Activated T-helper 1 cell treated with anti-CD3 and anti-CD28 coated beads, Interleukin-12 subunit alpha, Interleukin-12 subunit beta, Interleukin-2, Interleukin-4 antibody, amounts not matched to agents 30 ng/mL and 10 ng/mL and 1 ng/mL, durations not matched to agents 14 hours and 24 hours and 36 hours (primary cell): ENCODE measurements at regions of chr20 and their contacts with region 1.

Region 1: GRCh38 chr20:34069341-34070078 is 42.5 kb downstream of the EIF2S2 start:
- DNase-seq: peak; percentile 25
- H3K4me3 Mint-ChIP-seq: no peak overlapping the region
- H3K27ac Mint-ChIP-seq: no peak overlapping the region
- H3K4me1 Mint-ChIP-seq: peaks cover 35% of the 10 kb centered on the region
- H3K27me3 Mint-ChIP-seq: no peaks in the 10 kb centered on the region

Region 2: GRCh38 chr20:33915726-33916331 is 153.7 kb before region 1 on chr20:
- intact Hi-C with region 1: loop called (anchors 1 kb)
- DNase-seq: peak; percentile 20
- H3K4me3 Mint-ChIP-seq: no peak overlapping the region
- H3K27ac Mint-ChIP-seq: no peak overlapping the region
- H3K4me1 Mint-ChIP-seq: peaks cover 5% of the 10 kb centered on the region
- H3K27me3 Mint-ChIP-seq: peaks cover 13% of the 10 kb centered on the region

Region 3: DNA sequence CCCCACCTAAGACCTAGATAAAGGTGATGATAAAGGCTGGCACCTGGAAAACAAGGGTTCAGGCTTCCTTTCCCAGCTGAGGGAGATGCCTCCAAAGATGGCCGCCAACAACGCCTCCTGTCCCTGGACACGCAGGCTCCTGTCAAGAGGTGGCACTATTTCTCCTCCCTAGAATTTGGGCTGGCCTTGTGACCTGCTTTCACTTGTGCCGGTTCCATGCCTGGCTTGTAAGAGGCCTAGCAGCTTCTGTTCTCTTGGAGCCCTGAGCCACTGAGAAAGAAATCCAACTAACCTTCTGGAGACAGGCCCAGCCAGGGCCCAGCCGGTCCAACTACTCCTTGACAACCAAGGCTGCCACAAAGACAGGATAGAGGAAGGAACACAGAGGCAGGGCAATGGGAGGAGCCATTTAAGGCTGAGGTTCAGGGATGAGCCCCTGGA is 136.0 kb before region 1 on chr20:
- intact Hi-C with region 1: loop called (anchors 1 kb)
- DNase-seq: peak; percentile 42
- H3K4me3 Mint-ChIP-seq: no peak overlapping the region
- H3K27ac Mint-ChIP-seq: no peak overlapping the region
- H3K4me1 Mint-ChIP-seq: no peaks in the 10 kb centered on the region
- H3K27me3 Mint-ChIP-seq: peaks cover 3% of the 10 kb centered on the region

Region 4: GRCh38 chr20:33947709-33948295 is 121.7 kb before region 1 on chr20:
- intact Hi-C with region 1: loop called (anchors 1 kb)
- DNase-seq: peak; percentile 9
- H3K4me3 Mint-ChIP-seq: no peak overlapping the region
- H3K27ac Mint-ChIP-seq: no peak overlapping the region
- H3K4me1 Mint-ChIP-seq: no peaks in the 10 kb centered on the region
- H3K27me3 Mint-ChIP-seq: peaks cover 4% of the 10 kb centered on the region

Region 5: DNA sequence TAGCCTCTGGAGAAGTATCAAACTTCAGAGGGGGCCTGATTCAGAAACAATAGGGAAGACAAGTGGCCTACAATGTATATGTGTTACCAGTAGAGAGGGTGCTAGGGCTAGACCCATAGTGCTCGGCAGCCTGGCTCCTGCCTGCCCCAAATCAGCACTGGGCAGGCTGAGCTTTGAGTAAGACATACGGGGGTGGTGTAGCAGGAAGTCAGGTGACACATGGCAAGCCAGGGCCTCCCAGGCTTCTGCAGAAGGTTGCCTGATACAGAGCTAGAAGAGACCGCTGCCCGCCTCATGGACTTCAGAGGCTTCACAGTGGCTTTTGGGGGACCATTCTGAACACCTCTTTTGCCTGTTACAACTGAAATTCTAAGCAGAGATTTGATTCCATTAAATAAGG is 32.4 kb before region 1 on chr20:
- intact Hi-C with region 1: loop called (anchors 1 kb)
- DNase-seq: peak; percentile 8
- H3K4me3 Mint-ChIP-seq: peak overlapping the region; percentile 63
- H3K27ac Mint-ChIP-seq: peak overlapping the region; percentile 64
- H3K4me1 Mint-ChIP-seq: peaks cover 27% of the 10 kb centered on the region
- H3K27me3 Mint-ChIP-seq: no peaks in the 10 kb centered on the region